GM23248 (cell line): ENCODE measurements at regions of chr16 and their contacts with region 1.

Region 1: DNA sequence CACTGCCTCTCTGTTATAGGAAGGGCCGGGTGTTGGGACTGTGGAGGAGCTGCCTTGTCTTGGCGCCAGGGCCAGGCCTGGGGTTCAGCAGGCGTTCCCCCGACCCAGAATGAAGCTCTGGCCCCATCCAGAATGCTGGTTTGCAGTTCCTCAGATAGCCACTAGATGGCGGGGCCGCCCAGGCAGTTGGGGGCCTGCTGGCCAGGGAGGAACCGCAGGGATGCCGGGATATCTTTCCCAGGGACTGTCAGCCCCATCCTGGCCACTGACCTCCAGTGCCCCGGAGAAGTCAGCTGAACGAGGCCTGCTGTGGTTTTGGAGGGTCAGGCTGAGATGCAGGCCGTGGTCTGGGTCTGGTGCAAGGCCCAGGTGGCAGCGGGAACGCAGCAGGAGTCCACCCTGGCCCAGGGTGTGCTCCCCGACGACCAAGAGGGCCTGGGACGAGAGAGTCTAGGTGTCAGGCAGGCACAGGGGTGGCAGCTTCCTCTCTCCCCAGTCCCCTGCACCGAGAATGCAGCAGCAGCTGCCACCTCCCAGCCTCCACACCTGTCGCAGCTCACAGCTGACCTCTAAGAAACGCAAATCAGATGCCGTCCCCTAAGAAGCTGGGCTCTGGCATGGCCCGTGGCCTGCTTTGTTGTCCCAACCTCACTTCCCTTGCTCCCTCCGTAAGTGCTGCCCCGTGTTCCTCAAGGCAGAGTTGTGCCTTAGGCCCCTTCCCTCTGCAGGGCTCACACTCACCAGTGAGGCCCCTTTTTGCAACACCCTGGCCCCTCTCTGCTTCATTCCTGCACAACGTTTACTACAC is 51.2 kb downstream of the RMI2 start:
- DNase-seq: peak; percentile 81
- H3K4me3 ChIP-seq: no peak overlapping the region
- H3K27ac ChIP-seq: no peak overlapping the region
- H3K4me1 ChIP-seq: no peaks in the 10 kb centered on the region
- H3K27me3 ChIP-seq: no peaks in the 10 kb centered on the region

Region 2: DNA sequence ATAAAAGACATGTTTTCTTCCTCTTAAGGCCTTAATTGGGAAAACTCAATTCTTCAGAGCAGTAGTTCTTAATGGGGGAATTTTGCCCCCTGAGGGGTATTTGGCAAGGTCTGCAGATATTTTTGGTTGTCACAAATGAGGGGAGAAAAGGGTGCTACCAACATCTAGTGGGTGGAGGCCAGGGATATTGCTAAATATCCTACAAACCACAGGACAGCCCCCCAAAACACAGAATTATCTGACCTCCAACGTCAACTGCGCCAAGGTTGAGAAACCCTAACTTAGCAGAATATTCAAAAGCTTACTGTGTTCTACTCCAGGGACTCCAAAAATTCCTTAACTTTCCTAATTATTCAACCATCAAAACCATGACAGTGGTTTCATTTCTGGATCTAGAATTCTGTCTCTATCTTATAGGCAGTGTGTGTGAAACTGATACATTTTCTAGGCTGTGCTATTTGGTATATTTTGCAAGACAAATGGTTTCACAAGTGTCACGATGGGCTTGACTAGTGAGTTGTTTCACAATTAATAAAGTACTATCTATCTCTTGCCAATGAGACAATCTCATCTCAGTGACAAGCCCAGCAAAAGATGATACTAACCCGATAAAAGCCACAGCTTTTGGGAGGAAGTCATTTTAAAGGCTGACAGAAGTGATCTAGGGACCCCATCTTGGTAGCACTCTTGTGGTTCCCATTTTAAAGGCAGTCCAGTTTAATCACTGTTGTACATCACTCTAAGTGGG is 331.5 kb after region 1 on chr16:
- in situ Hi-C with region 1: loop called (anchors 10 kb)
- DNase-seq: no peak
- H3K4me3 ChIP-seq: no peak overlapping the region
- H3K27ac ChIP-seq: no peak overlapping the region
- H3K4me1 ChIP-seq: no peaks in the 10 kb centered on the region; the same call in 1 of the 2 replicates
- H3K27me3 ChIP-seq: no peaks in the 10 kb centered on the region

Region 3: DNA sequence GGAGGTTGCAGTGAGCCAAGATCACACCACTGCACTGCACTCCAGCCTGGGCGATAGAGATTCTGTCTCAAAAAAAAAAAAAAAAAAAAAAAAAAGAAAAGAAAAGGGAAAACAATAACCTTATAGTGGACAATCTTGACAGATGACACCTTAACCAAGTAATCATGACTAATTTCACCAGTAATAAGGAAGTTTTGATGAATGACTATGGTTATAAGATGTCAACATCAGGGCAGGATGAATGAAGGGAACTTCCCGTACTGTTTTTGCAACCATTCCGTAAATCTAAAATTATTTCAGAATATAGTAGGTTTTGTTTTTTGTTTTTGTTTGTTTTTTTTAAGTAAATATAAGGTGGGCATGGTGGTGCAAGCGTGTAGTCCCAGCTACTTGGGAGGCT is 496.3 kb after region 1 on chr16:
- in situ Hi-C with region 1: no loop called
- DNase-seq: no peak
- H3K4me3 ChIP-seq: no peak overlapping the region
- H3K27ac ChIP-seq: no peak overlapping the region
- H3K4me1 ChIP-seq: peaks cover 18% of the 10 kb centered on the region
- H3K27me3 ChIP-seq: no peaks in the 10 kb centered on the region